ENCODE measurements at regions of chr17 and their contacts with region 1.

Region 1: DNA sequence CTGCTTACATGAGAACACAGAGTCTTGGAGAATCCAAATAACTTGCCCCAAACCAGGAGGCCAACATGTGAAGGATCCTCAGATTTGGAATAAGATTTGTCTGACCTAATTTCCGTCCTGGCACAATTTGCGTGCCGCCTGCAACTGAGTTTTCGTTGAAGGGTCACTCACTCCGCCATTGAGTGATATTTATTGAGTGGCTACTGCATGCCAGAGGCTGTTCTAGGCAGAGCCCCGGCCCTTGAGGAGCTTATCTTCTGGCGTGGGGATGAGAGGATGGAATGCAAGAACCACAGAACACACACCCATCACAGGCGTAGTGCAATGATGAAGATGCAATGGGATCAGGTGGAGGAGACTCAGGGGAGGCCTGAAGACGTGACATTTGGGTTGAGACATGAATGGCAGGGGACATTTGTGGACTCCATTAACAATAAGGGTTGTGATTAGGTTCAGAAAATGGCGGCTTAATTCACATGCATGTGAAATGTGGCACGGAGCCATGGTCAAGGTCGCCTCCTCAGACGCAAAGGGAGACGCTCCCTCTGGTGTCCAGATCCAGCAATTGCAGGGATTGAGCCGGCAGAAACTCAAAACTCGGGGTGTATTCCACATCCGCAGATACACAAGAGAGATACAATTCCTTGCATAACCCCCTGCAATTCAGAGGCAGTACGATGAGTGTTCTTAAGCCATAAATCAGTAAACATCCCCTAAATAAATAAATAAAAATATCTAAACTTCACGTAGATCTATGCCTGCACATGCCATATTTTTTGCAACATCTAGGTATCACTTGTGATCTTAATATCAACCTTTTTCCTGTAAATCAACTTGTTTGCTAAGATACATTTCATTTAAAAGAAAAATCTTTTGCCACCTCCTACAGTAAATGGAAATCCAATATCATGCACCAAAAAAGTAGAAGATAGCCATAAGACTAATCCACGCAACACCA is 57.9 kb upstream of the CACNG4 start:
- DNase-seq: peak; percentile 86
- ATAC-seq: peak; percentile 64
- H3K4me3 Mint-ChIP-seq: no peak overlapping the region
- H3K27ac Mint-ChIP-seq: no peak overlapping the region
- H3K4me1 Mint-ChIP-seq: peaks cover 5% of the 10 kb centered on the region
- H3K27me3 Mint-ChIP-seq: peaks cover 4% of the 10 kb centered on the region

Region 2: GRCh38 chr17:66715745-66716156 is 190.8 kb before region 1 on chr17:
- CTCF ChIA-PET with region 1: no interaction called
- POLR2A ChIA-PET with region 1: no interaction called
- intact Hi-C with region 1: loop called (anchors 1 to 2 kb)
- DNase-seq: no peak
- ATAC-seq: peak; percentile 50
- H3K4me3 Mint-ChIP-seq: no peak overlapping the region
- H3K27ac Mint-ChIP-seq: no peak overlapping the region
- H3K4me1 Mint-ChIP-seq: peaks cover 31% of the 10 kb centered on the region
- H3K27me3 Mint-ChIP-seq: no peaks in the 10 kb centered on the region

Region 3: DNA sequence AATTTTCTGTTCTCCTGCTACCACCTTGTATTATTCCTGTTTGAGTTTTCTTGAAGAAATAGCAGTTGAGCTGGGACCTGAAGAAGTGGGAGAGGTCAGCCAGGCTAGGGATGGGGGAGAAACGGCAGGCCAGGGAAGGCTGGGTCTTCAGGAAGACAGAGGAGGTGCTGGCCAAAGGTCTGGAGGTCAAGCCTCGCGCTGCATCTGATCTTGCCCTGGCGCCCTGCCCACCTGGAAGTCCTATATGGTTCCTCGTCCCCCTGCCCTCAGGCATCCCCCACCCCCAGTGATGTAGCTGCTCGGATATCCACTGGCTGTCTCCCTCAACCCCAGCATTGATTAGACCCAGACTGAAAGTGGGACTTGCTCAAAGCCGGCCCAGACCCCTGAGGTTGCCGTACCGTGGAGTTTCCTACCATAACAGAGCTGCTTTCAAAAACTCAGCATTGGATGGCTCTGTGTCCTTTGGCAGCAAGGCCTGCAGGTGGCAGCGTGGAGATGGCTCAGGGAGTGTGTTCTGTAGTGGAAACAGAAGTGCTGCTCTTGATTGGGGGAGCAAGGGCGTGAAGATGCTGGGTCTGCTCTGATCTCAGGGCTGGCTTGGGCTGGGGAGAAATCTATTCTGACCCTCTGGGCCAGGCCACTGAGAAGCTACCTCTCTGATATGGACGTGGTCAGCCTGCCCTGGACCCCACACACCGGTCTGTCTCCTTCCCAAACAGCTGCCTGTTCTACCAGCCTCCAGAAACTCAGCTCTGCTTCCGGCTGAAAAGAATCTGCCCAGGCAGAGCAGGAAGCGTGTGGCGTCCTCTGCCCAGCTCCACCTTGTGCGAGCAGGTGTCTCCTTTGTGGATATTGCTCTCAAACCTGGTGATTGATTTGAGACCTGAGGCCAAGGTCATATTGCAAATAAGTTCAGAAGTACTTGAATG is 178.7 kb before region 1 on chr17:
- CTCF ChIA-PET with region 1: interaction called, 3 read pairs
- POLR2A ChIA-PET with region 1: no interaction called
- intact Hi-C with region 1: loop called in 1 of 2 experiments (anchors 1 kb)
- DNase-seq: peak; percentile 69
- ATAC-seq: peak; percentile 80
- H3K4me3 Mint-ChIP-seq: no peak overlapping the region
- H3K27ac Mint-ChIP-seq: no peak overlapping the region
- H3K4me1 Mint-ChIP-seq: peaks cover 2% of the 10 kb centered on the region
- H3K27me3 Mint-ChIP-seq: no peaks in the 10 kb centered on the region

Region 4: GRCh38 chr17:66965801-66966278 is 59.2 kb after region 1 on chr17:
- CTCF ChIA-PET with region 1: no interaction called
- POLR2A ChIA-PET with region 1: no interaction called
- intact Hi-C with region 1: no loop called
- DNase-seq: peak; percentile 20
- ATAC-seq: peak; percentile 54
- H3K4me3 Mint-ChIP-seq: peak overlapping the region; percentile 52
- H3K27ac Mint-ChIP-seq: no peak overlapping the region
- H3K4me1 Mint-ChIP-seq: peaks cover 5% of the 10 kb centered on the region
- H3K27me3 Mint-ChIP-seq: peaks cover 62% of the 10 kb centered on the region

Region 5: DNA sequence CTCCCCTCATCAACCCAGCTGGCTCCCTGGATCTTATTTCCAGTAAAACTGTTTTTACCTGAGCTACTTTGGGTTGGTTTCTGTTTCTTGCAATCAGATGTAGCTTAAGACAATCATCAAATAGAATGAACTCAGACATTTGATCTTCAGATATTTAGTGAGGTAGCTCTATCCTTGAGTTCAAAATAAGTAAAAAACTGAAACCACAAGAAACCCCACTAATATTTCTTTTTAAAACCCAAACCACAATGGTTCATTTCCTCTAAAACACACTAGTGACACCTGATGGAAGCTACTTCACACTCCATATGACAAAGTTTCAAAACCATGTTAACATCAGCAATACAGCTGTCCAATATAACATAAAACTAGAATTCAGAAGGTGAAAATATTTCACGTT is 175.5 kb after region 1 on chr17:
- CTCF ChIA-PET with region 1: no interaction called
- POLR2A ChIA-PET with region 1: no interaction called
- intact Hi-C with region 1: no loop called
- DNase-seq: no peak
- ATAC-seq: peak; percentile 58
- H3K4me3 Mint-ChIP-seq: no peak overlapping the region
- H3K27ac Mint-ChIP-seq: peak overlapping the region; percentile 58
- H3K4me1 Mint-ChIP-seq: peaks cover 15% of the 10 kb centered on the region
- H3K27me3 Mint-ChIP-seq: no peaks in the 10 kb centered on the region

Measured in activated CD4-positive, alpha-beta T cell treated with anti-CD3 and anti-CD28 coated beads for 36 hours (primary cell).